ENCODE measurements at regions of chr5 and their contacts with region 1.

Region 1: DNA sequence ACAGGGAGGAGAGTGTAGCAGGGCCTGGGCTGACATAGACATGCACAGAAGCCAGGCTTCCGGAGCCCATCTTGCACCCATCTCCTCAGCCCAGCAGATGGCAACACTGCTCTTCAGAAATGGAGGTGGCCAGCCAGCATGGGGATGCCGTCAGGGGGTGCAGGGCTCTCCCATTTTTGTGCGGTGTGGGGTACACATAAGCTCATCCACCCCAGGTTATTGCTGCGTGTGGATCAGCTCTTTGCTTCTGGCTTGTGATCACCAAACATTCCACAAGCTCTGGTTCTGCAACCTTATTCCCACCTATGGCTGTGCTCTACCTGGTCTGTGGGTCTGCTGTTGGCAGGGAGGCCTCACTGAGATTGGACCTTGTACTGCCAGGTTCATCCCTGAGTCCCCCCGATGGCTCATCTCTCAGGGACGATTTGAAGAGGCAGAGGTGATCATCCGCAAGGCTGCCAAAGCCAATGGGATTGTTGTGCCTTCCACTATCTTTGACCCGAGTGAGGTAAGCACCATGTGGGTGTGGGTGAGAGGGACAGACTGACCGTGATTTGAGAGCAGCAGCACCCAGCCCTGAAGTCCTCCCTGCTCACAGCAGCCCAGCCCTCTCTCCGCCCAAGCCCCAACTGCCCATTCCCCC is 17.3 kb downstream of the SLC22A5 start:
- DNase-seq: peak; percentile 70
- ATAC-seq: peak; percentile 96
- H3K4me3 ChIP-seq: no peak overlapping the region
- H3K27ac ChIP-seq: no peak overlapping the region
- H3K4me1 ChIP-seq: peaks cover 20% of the 10 kb centered on the region
- H3K27me3 ChIP-seq: no peaks in the 10 kb centered on the region
- CTCF ChIP-seq: peak; percentile 86 to 97 (median 93)
- EP300 ChIP-seq: no peak
- POLR2A ChIP-seq: no peak
- RAD21 ChIP-seq: peak; percentile 91

Region 2: GRCh38 chr5:132180134-132180745 is 206.5 kb before region 1 on chr5:
- CTCF ChIA-PET with region 1: interaction called, 10 read pairs
- POLR2A ChIA-PET with region 1: no interaction called
- RAD21 ChIA-PET with region 1: interaction called, 4 read pairs
- SMC1A ChIA-PET with region 1: interaction called, 10 read pairs
- in situ Hi-C with region 1: no loop called
- intact Hi-C with region 1: loop called (anchors 5 kb)
- DNase-seq: no peak
- ATAC-seq: peak; percentile 63
- H3K4me3 ChIP-seq: no peak overlapping the region
- H3K27ac ChIP-seq: no peak overlapping the region
- H3K4me1 ChIP-seq: peaks cover 11% of the 10 kb centered on the region
- H3K27me3 ChIP-seq: no peaks in the 10 kb centered on the region
- CTCF ChIP-seq: peak; percentile 66 to 69 (median 69)
- EP300 ChIP-seq: no peak
- POLR2A ChIP-seq: no peak
- RAD21 ChIP-seq: peak; percentile 84

Region 3: DNA sequence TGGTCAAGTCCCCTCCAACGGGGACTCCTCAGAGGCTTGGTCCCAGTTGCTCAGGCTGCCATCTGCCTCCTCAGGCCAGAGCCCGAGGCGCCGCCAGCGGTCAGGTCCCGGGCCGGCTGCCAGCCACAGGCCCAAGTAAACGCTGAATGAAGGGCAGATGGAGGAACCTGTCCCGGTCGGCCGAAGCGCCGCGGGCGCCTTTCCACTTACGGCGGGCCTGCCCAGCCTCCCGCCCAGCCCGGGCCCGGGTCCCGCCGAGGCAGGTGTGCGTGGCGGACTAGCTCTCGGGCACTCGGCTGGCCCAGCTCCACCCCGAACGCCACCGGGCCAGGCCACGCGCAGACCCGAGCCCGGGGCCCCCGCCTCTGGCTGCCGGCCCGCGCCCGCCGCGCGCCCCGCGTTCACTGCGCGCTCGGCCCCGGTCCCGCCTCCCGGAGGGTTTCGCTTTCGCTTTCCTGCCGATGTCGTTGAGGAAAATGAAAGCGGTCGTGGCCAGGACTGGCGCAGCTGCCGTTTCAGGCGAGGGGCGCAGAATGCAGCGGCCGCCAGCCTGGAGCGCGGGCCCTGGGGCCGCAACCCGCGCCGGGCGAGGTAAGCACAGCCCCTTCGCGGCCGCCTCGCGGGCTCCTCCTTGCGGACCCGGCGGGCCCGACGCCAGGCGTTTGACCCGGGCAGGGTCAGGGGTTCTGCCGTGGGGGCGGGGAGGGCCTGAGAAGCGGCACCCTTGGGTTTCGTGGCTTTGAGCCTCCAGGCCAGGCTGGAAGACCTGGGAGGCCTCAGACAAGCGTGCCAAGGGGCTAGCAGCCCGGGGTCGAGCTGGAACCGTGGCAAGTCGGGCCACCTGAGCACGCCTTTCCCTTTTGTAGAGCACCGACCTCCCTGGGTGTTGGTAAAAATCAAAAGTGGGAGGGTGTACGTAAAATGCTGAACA is 24.0 kb after region 1 on chr5:
- CTCF ChIA-PET with region 1: interaction called, 31 read pairs
- POLR2A ChIA-PET with region 1: interaction called, 6 read pairs
- RAD21 ChIA-PET with region 1: interaction called, 25 read pairs
- SMC1A ChIA-PET with region 1: interaction called, 44 read pairs
- in situ Hi-C with region 1: no loop called
- intact Hi-C with region 1: loop called (anchors 2 kb)
- DNase-seq: no peak
- ATAC-seq: peak; percentile 68
- H3K4me3 ChIP-seq: peak overlapping the region; percentile 89
- H3K27ac ChIP-seq: peak overlapping the region; percentile 95
- H3K4me1 ChIP-seq: peaks cover 11% of the 10 kb centered on the region
- H3K27me3 ChIP-seq: no peaks in the 10 kb centered on the region
- CTCF ChIP-seq: peak; percentile 54 to 67 (median 61)
- EP300 ChIP-seq: peak in 1 of 2 experiments; percentile 39; a peak in 1 of 4 replicates
- POLR2A ChIP-seq: peak; percentile 90
- RAD21 ChIP-seq: peak; percentile 51; the same call in 1 of the 2 replicates

Region 4: DNA sequence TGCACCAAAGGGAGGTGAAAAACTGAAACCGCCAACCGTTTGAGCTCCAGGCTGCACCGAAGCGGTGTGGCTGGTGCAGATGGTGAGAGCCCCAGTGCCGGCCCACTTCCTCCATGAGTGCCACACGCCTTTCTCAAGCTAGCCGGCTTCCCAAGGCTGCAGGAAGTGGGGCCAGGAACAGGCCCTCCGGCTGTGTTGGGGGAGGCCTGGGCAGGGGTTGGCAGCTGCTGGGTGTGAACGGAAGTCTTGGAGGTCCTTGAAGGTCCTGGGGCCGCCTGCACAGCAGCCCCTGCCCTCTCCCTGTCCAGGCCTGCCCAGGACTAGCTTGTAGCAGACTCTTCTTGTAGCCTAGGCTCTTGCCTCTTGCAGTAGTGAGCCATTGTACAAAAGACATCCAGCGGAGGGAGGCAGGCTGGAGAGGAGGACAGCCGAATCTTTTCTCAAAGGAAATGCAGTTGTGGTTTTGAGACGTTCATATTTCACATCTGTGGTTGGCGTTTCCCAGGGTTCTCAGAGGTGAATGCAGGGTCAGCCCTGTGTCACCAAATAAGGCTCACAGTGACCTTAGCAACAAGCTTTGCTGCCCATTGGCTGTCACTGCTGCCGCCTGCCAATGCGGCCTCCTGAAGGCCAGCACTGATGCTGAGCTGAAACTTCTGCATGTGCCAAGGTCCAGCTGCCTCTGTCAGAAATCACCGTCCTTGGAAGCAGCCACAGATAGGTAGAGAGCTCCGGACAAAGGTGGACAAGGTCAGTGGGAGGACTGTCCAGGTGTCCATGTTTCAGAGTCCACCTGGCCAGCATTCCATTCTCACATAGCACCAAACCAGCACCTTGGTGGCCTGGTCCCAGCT is 79.9 kb after region 1 on chr5:
- CTCF ChIA-PET with region 1: interaction called, 11 read pairs
- POLR2A ChIA-PET with region 1: no interaction called
- RAD21 ChIA-PET with region 1: interaction called, 3 read pairs
- SMC1A ChIA-PET with region 1: interaction called, 12 read pairs
- in situ Hi-C with region 1: no loop called
- intact Hi-C with region 1: no loop called
- DNase-seq: peak; percentile 94
- ATAC-seq: peak; percentile 83
- H3K4me3 ChIP-seq: peak overlapping the region; percentile 42; the same call in 1 of the 2 replicates
- H3K27ac ChIP-seq: peak overlapping the region; percentile 96
- H3K4me1 ChIP-seq: peaks cover 60% of the 10 kb centered on the region
- H3K27me3 ChIP-seq: no peaks in the 10 kb centered on the region
- CTCF ChIP-seq: no peak
- EP300 ChIP-seq: peak; percentile 48 to 78; a peak in 3 of 4 replicates
- POLR2A ChIP-seq: no peak
- RAD21 ChIP-seq: peak; percentile 33

Region 5: DNA sequence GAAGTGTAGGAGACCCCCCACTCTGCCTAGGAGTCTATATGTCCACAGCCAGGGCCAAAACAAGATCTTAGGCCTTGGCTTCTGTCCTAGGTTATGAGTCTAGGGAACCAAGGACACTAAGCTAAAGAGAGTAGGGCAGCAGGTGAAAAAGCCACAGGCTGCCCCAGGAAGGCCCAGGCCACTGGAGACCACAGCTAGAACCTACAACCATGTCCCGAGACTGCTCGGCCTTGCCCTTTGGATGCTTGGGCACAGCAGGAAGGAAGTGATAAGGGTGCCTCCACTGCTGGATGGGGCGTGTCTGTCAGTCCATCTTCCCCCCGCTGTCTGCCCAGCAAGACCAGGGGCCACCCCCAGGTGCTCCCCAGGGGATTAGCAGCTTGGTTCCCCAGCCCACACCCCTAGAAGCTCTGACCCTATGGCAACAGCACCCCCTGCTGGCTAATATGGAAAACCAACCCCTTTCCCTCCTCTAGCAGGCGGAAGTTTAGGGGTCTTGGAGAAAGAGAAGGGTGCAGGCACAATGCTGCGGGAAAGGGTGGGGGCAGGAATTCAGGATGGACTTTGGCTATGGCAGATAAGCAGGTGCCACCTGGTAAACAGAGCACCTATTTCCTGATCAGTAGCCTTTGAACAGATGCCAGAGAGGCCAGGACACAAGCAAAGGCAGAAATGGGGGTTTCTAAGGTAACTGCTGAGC is 114.3 kb after region 1 on chr5:
- CTCF ChIA-PET with region 1: interaction called, 481 read pairs
- POLR2A ChIA-PET with region 1: interaction called, 16 read pairs
- RAD21 ChIA-PET with region 1: interaction called, 279 read pairs
- SMC1A ChIA-PET with region 1: interaction called, 340 read pairs
- in situ Hi-C with region 1: loop called (anchors 10 kb)
- intact Hi-C with region 1: loop called (anchors 1 kb)
- DNase-seq: no peak
- ATAC-seq: peak; percentile 55
- H3K4me3 ChIP-seq: no peak overlapping the region
- H3K27ac ChIP-seq: peak overlapping the region; percentile 42; the same call in 1 of the 2 replicates
- H3K4me1 ChIP-seq: peaks cover 34% of the 10 kb centered on the region
- H3K27me3 ChIP-seq: no peaks in the 10 kb centered on the region
- CTCF ChIP-seq: peak; percentile 80 to 94 (median 85); a peak in 5 of 6 replicates
- EP300 ChIP-seq: 0 out of 4 replicates have a peak, but pooled peaks of 1 of the 2 experiments have one; percentile 11
- POLR2A ChIP-seq: no peak
- RAD21 ChIP-seq: peak; percentile 100

Region 6: DNA sequence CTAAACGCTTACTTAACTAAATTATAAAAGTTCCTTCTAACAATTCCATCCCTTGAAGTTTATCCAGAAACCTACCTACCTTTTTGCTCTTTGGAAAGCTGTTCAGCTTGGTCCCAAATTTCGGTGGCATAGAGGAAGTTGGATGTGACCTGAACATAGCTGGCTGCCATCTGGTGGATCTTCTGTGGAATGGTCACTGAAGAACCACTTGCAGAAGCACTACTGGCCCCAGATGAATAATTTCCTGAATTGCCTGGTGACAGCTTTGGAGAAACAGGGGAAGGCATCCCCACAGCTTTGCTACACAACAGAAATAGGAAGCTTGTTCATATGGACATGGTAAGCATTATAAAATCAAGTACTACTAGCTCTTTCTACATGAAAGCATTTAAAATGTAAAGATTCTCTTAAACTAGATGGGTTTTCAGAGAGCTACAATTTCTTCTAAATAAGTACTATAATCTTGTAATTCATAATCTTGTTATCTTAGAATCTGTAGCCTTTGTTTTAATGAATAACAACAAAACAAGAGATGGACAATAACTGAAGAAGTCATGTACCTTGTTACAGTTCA is 496.6 kb after region 1 on chr5:
- CTCF ChIA-PET with region 1: interaction called, 11 read pairs
- POLR2A ChIA-PET with region 1: interaction called, 4 read pairs
- RAD21 ChIA-PET with region 1: interaction called, 4 read pairs
- SMC1A ChIA-PET with region 1: interaction called, 8 read pairs
- in situ Hi-C with region 1: loop called (anchors 5 kb)
- intact Hi-C with region 1: loop called (anchors 1 kb)
- DNase-seq: no peak
- ATAC-seq: peak; percentile 96
- H3K4me3 ChIP-seq: no peak overlapping the region
- H3K27ac ChIP-seq: no peak overlapping the region
- H3K4me1 ChIP-seq: no peaks in the 10 kb centered on the region
- H3K27me3 ChIP-seq: no peaks in the 10 kb centered on the region
- CTCF ChIP-seq: peak; percentile 61 to 78 (median 67)
- EP300 ChIP-seq: no peak
- POLR2A ChIP-seq: no peak
- RAD21 ChIP-seq: peak; percentile 64

Measured in GM12878 (cell line).